ENCODE measurements at regions of chrX and their contacts with region 1.

Region 1: DNA sequence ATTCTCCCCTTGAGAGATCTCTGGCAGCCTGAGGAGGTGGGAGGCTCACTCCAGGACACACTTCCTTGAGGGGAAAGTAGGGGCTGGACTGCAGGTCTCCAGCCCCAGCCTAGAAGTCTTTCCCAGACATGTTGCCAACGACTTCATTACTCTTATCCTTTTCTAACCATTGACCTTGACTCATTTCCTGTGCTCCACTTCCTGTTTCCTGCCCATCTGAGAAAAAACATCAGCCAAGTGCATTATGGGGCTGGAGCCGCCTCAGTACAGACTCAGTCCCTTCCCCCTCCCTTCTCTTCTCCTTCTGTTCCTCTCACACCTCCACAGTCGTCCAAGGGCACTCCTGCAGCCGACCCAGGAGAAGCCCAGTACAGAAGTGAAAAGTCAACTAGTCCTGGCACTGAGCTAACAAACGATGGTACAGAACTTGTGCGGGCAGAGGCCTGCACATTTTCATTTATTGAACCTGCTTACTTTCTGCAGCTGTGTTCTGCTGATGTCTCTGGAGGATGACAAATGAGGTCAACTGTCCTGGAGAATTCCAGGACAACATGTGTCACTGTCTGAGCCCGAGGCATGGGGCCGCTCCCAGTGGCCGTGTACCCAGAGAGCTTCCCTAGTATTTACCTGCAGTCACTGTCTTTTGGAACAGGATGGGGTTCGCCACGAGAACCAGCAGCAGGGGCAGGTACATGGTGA is 20.1 kb downstream of the GPR143 start:
- DNase-seq: no peak
- H3K4me3 Mint-ChIP-seq: no peak overlapping the region
- H3K27ac Mint-ChIP-seq: no peak overlapping the region
- H3K4me1 Mint-ChIP-seq: no peaks in the 10 kb centered on the region
- H3K27me3 Mint-ChIP-seq: no peaks in the 10 kb centered on the region
- CTCF ChIP-seq: no peak

Region 2: GRCh38 chrX:8548446-8548845 is 1197.1 kb before region 1 on chrX:
- CTCF ChIA-PET with region 1: no interaction called
- intact Hi-C with region 1: no loop called
- DNase-seq: no peak
- H3K4me3 Mint-ChIP-seq: no peak overlapping the region
- H3K27ac Mint-ChIP-seq: no peak overlapping the region
- H3K4me1 Mint-ChIP-seq: no peaks in the 10 kb centered on the region
- H3K27me3 Mint-ChIP-seq: no peaks in the 10 kb centered on the region
- CTCF ChIP-seq: no peak

Region 3: DNA sequence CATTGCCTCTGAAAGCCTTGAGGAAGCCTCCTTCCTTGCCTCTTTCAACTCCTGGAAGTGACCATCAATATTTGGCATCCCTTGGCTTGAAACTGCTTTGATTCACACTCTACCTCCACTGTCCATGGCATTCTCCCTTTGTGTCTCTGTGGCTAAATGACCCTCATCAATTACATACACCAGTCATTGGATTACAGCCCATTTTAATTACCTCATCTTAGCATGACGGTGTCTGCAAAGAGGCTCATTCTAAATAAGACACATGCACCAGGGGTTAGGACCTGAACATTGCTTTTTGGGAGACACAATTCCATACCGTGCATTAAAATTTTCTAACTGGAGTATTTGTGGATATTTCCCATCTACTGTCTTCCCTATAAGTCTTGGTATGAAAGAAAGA is 883.7 kb before region 1 on chrX:
- CTCF ChIA-PET with region 1: interaction called, 12 read pairs
- intact Hi-C with region 1: no loop called
- DNase-seq: no peak
- H3K4me3 Mint-ChIP-seq: no peak overlapping the region
- H3K27ac Mint-ChIP-seq: no peak overlapping the region
- H3K4me1 Mint-ChIP-seq: no peaks in the 10 kb centered on the region
- H3K27me3 Mint-ChIP-seq: no peaks in the 10 kb centered on the region
- CTCF ChIP-seq: no peak

Region 4: GRCh38 chrX:9501362-9501761 is 244.2 kb before region 1 on chrX:
- CTCF ChIA-PET with region 1: no interaction called
- intact Hi-C with region 1: no loop called
- DNase-seq: no peak
- H3K4me3 Mint-ChIP-seq: no peak overlapping the region
- H3K27ac Mint-ChIP-seq: no peak overlapping the region
- H3K4me1 Mint-ChIP-seq: no peaks in the 10 kb centered on the region
- H3K27me3 Mint-ChIP-seq: no peaks in the 10 kb centered on the region
- CTCF ChIP-seq: no peak